BJ (cell line): ENCODE measurements at regions of chr2 and their contacts with region 1.

Region 1: DNA sequence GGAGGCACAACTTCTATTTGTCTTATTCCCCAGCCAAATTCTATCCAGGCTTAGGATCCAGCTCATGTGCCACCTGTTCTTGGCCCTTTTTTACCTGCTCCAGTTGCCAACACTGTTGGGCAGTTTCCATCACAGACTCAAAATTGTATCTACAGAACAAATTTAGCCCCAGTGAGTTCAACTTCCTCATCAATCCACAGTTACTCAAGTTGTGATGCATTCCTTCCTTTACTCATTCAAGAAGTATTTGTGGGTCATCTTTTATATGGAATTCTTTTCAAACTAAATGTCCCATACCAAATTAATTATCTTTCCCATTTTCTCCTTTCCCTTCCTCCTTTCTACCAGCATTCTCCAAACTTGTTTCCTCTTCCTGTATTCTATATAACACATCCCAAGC is 12.7 kb upstream of the DDX18 start:
- DNase-seq: peak; percentile 47
- H3K4me3 ChIP-seq: no peak overlapping the region
- H3K27me3 ChIP-seq: no peaks in the 10 kb centered on the region
- CTCF ChIP-seq: no peak

Region 2: GRCh38 chr2:117785740-117786139 is 16.1 kb before region 1 on chr2:
- CTCF ChIA-PET with region 1: interaction called, 11 read pairs
- POLR2A ChIA-PET with region 1: no interaction called
- DNase-seq: no peak
- H3K4me3 ChIP-seq: no peak overlapping the region
- H3K27me3 ChIP-seq: no peaks in the 10 kb centered on the region
- CTCF ChIP-seq: peak; percentile 70

Region 3: GRCh38 chr2:117850015-117850414 is 48.2 kb after region 1 on chr2:
- CTCF ChIA-PET with region 1: no interaction called
- POLR2A ChIA-PET with region 1: no interaction called
- DNase-seq: no peak
- H3K4me3 ChIP-seq: no peak overlapping the region
- H3K27me3 ChIP-seq: peaks cover 4% of the 10 kb centered on the region
- CTCF ChIP-seq: no peak